Activated CD4-positive, alpha-beta T cell treated with anti-CD3 and anti-CD28 coated beads for 36 hours (primary cell): ENCODE measurements at regions of chr3 and their contacts with region 1.

Region 1: DNA sequence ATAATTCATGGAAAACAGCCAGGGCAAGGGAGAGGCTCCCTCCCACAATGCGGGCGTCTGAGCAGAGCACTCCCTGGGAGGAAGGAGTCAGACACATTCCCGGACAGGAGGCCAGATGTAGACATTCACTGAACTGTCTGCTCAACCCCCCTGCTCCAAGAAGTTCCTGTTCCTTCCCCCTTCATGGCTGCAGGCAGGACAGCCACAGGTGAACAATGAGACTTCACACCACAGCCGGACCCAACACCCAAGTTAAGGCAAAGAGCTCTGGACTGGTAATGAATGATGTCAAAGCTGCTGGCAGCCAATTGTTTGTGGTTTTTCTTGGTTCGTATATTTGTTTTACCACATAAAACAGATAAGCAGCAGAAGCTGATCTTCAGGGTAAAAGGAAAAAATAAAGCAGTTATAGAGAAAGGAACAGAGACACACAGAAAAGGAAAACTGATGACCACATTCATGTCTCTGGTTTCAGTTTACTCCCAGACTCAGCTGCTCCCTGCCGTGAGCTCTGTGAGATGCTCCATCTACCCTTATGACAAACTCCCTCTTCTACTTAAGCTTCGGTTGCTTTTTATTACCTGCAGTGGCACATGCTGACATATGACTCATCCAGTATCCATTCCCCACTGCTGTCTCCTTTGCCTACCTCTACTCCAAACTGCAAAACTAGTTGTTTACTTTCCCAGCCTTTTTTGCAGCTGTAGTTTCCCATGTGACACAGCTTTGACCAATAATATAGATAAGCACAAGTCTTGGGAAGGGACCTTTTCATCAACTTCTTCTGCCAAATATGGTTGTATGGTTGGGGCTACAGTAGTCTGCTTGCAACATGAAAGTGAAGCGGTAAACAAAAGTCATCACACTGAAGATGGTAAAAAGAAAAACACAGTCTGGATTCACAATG is 33.1 kb downstream of the DZIP1L start:
- DNase-seq: peak; percentile 38
- ATAC-seq: peak; percentile 80
- H3K4me3 Mint-ChIP-seq: peak overlapping the region; percentile 1
- H3K27ac Mint-ChIP-seq: peak overlapping the region; percentile 11
- H3K4me1 Mint-ChIP-seq: peaks cover 36% of the 10 kb centered on the region
- H3K27me3 Mint-ChIP-seq: peaks cover 4% of the 10 kb centered on the region

Region 2: GRCh38 chr3:138118612-138119422 is 36.5 kb after region 1 on chr3:
- CTCF ChIA-PET with region 1: interaction called, 15 read pairs
- POLR2A ChIA-PET with region 1: no interaction called
- intact Hi-C with region 1: no loop called
- DNase-seq: peak; percentile 77
- ATAC-seq: peak; percentile 72
- H3K4me3 Mint-ChIP-seq: no peak overlapping the region
- H3K27ac Mint-ChIP-seq: no peak overlapping the region
- H3K4me1 Mint-ChIP-seq: peaks cover 4% of the 10 kb centered on the region
- H3K27me3 Mint-ChIP-seq: peaks cover 20% of the 10 kb centered on the region

Region 3: GRCh38 chr3:138174421-138175122 is 92.2 kb after region 1 on chr3 and contains the start of gene DBR1:
- CTCF ChIA-PET with region 1: no interaction called
- POLR2A ChIA-PET with region 1: no interaction called
- intact Hi-C with region 1: loop called in 1 of 2 experiments (anchors 5 kb)
- DNase-seq: peak; percentile 85
- ATAC-seq: peak; percentile 85
- H3K4me3 Mint-ChIP-seq: peak within 1 kb of the TSS; percentile 89
- H3K27ac Mint-ChIP-seq: peak within 1 kb of the TSS; percentile 96
- H3K4me1 Mint-ChIP-seq: peaks cover 30% of the 10 kb centered on the region
- H3K27me3 Mint-ChIP-seq: no peaks in the 10 kb centered on the region
- total RNA-seq, gene DBR1: 16.4 to 22.0 TPM

Region 4: DNA sequence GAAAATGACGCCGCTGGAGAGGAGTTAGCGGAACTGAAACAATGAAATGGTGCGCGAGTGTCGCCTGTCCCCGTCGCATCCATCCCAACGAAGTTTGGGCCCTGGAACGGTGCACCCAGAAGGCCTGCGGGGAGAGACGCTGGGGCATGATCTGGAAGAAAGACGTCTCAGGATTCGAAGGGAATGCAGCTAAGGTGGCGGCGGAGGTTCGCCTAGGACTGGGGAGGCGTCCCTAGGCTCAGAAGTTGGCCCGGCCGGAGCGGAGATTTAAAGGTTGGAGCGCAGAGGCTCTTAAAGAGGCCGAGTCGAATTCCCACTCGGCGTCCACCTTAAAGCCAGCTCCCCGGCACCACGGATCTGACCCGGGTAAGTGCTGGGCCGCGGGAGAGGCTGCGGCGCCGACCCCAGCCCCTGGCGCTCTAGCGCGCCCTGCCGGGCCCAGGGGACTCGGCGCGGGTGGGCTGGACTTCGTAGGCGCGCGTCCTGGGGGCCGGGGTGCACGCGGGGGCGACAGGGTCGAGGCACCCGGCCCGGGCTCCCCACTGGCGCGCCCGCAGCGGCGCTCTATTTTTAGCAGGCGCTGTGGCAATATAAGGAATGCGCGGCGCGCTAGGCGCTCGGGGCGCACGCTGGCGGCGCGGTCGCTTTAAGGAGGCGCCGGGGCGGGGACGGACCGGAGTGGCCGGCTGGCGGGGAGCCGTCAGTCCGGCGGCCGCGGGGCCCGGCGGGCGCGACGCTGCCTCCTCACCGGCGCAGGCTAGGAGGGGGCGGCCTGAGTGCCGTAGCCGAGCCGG is 265.8 kb after region 1 on chr3 and contains the start of gene MRAS:
- CTCF ChIA-PET with region 1: no interaction called
- POLR2A ChIA-PET with region 1: no interaction called
- intact Hi-C with region 1: no loop called
- DNase-seq: peak; percentile 59
- ATAC-seq: peak; percentile 81
- H3K4me3 Mint-ChIP-seq: peak within 1 kb of the TSS; percentile 84
- H3K27ac Mint-ChIP-seq: no peak within 1 kb of the TSS
- H3K4me1 Mint-ChIP-seq: peaks cover 6% of the 10 kb centered on the region
- H3K27me3 Mint-ChIP-seq: peaks cover 32% of the 10 kb centered on the region
- total RNA-seq, gene MRAS: 0.16 TPM